AG04449 (cell line): ENCODE measurements at regions of chr18 and their contacts with region 1.

Region 1: GRCh38 chr18:76803814-76804213 is 18.5 kb upstream of the ZNF236 start:
- DNase-seq: no peak
- H3K4me3 ChIP-seq: no peak overlapping the region
- CTCF ChIP-seq: peak; percentile 87

Region 2: GRCh38 chr18:76492669-76493212 is 311.1 kb before region 1 on chr18:
- CTCF ChIA-PET with region 1: no interaction called
- POLR2A ChIA-PET with region 1: no interaction called
- DNase-seq: peak; percentile 93
- H3K4me3 ChIP-seq: peak overlapping the region; percentile 78
- CTCF ChIP-seq: no peak

Region 3: DNA sequence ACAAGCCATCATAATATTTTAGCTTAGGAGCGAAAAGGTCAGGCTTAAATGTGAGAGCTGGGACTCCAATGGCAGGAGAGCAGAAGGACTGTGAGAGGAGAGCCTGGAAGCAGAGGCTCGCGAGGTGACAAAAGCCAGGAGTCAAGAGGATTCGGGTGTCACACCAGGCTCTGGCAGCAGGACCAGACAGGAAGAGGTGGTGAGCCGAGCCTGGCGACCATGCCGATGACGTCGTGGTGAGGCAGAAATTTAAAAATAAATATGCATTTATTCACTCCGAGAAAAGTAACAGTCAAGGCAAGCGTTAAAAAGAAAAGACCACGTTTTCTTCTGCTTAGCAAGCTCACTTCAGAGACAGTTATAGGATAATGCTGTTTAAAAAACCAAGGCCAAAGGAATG is 12.7 kb before region 1 on chr18:
- CTCF ChIA-PET with region 1: interaction called, 85 read pairs
- POLR2A ChIA-PET with region 1: interaction called, 4 read pairs
- DNase-seq: no peak
- H3K4me3 ChIP-seq: no peak overlapping the region
- CTCF ChIP-seq: no peak

Region 4: GRCh38 chr18:76844742-76845485 is 41.1 kb after region 1 on chr18:
- CTCF ChIA-PET with region 1: interaction called, 14 read pairs
- POLR2A ChIA-PET with region 1: no interaction called
- DNase-seq: no peak
- H3K4me3 ChIP-seq: no peak overlapping the region
- CTCF ChIP-seq: no peak

Region 5: DNA sequence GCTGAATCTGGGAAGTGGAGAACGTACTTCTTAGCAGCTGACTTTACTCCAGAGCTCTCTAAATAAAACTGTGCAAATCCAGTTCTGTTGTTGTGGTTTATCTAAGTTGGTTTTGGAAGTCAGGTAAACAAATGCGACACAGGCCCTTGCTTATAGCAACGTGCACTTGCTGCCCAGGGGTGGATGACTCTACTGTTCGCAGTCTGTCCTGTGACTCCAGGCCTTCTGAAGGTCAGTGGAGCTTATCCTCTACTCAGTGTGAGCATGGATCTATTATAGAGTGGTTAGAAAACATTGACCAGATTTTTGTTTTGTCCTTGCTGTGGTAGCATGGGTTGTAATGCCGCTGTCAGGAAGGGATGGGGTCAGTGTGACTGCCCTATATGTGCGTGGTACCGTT is 107.6 kb after region 1 on chr18:
- CTCF ChIA-PET with region 1: interaction called, 10 read pairs
- POLR2A ChIA-PET with region 1: no interaction called
- DNase-seq: no peak
- H3K4me3 ChIP-seq: no peak overlapping the region
- CTCF ChIP-seq: no peak

Region 6: GRCh38 chr18:76970770-76971559 is 167.2 kb after region 1 on chr18:
- CTCF ChIA-PET with region 1: interaction called, 21 read pairs
- POLR2A ChIA-PET with region 1: no interaction called
- DNase-seq: no peak
- H3K4me3 ChIP-seq: no peak overlapping the region
- CTCF ChIP-seq: no peak

Region 7: GRCh38 chr18:77207540-77207939 is 403.7 kb after region 1 on chr18:
- CTCF ChIA-PET with region 1: interaction called, 28 read pairs
- POLR2A ChIA-PET with region 1: no interaction called
- DNase-seq: peak; percentile 24
- H3K4me3 ChIP-seq: no peak overlapping the region
- CTCF ChIP-seq: peak; percentile 82